ENCODE measurements at regions of chr2 and their contacts with region 1.

Region 1: DNA sequence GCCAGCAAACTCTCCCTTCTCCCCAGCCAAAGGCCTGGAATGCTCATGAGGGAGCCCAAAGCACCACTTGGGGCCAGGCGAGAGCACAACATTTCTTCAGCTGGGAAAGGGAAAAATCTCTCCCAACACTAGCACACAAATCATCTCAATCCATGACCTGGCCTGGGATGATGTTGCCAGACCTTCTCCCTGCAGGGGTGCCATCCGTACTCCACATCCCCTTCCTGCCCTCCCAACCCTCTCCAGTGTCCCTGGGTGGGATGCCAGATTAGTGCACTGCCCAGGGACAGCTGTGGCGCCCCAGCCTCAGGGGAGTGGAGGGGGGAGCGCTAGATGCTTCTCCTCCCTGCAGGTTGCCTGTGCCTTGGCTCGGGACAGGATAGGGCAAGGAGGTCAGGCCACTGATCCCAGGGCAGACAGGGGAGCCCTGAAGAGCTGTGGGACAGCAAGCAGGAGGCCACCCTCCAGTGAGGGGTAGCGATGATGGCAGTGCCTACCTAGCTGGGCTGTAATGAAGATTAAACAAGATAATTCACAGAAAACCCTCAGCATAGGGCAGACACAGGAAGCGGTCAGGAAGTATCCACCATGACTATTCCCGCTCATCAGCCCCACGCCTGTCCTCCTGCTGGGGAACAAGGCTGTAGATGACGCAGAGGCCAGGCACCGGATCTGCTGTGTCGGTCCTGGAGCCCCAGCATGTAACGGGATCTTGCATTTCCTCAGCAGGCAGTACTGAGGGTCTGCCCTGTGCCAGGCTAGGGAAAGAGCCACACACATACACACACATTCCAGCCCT is 31.1 kb downstream of the SERTAD2 start:
- DNase-seq: no peak
- ATAC-seq: no peak
- H3K4me3 Mint-ChIP-seq: no peak overlapping the region
- H3K27ac Mint-ChIP-seq: no peak overlapping the region
- H3K4me1 Mint-ChIP-seq: no peaks in the 10 kb centered on the region
- H3K27me3 Mint-ChIP-seq: no peaks in the 10 kb centered on the region

Region 2: GRCh38 chr2:64695721-64696261 is 73.1 kb after region 1 on chr2:
- CTCF ChIA-PET with region 1: no interaction called
- POLR2A ChIA-PET with region 1: no interaction called
- intact Hi-C with region 1: no loop called
- DNase-seq: no peak
- ATAC-seq: no peak
- H3K4me3 Mint-ChIP-seq: no peak overlapping the region
- H3K27ac Mint-ChIP-seq: no peak overlapping the region
- H3K4me1 Mint-ChIP-seq: peaks cover 47% of the 10 kb centered on the region
- H3K27me3 Mint-ChIP-seq: no peaks in the 10 kb centered on the region

Region 3: GRCh38 chr2:64720535-64721327 is 98.1 kb after region 1 on chr2:
- CTCF ChIA-PET with region 1: no interaction called
- POLR2A ChIA-PET with region 1: interaction called, 10 read pairs
- intact Hi-C with region 1: no loop called
- DNase-seq: no peak
- ATAC-seq: peak; percentile 36
- H3K4me3 Mint-ChIP-seq: peak overlapping the region; percentile 30
- H3K27ac Mint-ChIP-seq: no peak overlapping the region
- H3K4me1 Mint-ChIP-seq: peaks cover 9% of the 10 kb centered on the region
- H3K27me3 Mint-ChIP-seq: no peaks in the 10 kb centered on the region

Measured in activated CD4-positive, alpha-beta T cell treated with anti-CD3 and anti-CD28 coated beads for 36 hours (primary cell).